ENCODE measurements at regions of chr7 and their contacts with region 1.

Region 1: DNA sequence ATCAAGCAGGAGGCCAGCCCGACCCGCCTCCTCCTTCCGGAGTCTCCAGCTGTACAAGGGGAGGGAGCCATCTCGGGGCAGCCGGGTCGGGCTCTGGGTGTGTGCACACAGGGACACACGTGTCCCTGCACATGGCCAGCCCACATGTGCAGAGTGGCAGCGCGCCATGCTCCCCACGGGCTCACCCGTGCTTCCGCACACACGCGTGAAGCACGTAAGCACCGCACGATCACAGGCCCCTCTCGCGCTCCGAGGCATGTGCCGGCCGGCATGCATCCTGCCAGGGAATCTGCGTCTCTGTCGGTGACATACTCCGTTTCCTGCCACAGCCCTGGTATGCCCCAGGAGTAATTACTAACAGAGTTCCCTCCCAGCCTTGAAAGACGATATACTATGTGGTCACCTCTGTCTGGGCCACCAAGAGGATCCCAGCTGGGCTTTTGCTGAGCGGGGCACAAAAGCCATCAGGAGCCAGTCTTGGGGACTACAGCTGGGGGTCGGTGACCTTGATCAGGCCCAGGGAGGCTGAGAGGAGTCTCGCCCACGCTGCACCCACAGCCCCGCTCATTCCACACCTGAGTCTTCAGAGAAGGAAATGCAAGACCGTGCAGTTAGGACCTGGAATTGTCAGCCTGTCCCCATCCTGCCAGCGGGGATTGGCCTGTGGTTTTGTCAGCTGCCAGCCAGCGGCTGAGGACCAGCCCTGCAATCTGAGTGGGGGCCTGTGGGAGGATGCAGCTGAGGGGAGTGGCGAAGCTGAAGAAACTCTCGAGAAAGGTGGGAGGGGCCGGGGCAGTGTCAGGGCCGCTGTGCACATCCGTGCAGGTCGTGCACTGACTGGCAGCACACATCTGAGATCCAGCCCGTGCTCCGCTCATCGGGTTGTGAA is 11.0 kb upstream of the LFNG start:
- DNase-seq: peak; percentile 89
- ATAC-seq: peak; percentile 64
- H3K4me3 Mint-ChIP-seq: peak overlapping the region; percentile 68
- H3K27ac Mint-ChIP-seq: peak overlapping the region; percentile 84
- H3K4me1 Mint-ChIP-seq: peaks cover 57% of the 10 kb centered on the region
- H3K27me3 Mint-ChIP-seq: no peaks in the 10 kb centered on the region
- CTCF ChIP-seq: no peak

Region 2: DNA sequence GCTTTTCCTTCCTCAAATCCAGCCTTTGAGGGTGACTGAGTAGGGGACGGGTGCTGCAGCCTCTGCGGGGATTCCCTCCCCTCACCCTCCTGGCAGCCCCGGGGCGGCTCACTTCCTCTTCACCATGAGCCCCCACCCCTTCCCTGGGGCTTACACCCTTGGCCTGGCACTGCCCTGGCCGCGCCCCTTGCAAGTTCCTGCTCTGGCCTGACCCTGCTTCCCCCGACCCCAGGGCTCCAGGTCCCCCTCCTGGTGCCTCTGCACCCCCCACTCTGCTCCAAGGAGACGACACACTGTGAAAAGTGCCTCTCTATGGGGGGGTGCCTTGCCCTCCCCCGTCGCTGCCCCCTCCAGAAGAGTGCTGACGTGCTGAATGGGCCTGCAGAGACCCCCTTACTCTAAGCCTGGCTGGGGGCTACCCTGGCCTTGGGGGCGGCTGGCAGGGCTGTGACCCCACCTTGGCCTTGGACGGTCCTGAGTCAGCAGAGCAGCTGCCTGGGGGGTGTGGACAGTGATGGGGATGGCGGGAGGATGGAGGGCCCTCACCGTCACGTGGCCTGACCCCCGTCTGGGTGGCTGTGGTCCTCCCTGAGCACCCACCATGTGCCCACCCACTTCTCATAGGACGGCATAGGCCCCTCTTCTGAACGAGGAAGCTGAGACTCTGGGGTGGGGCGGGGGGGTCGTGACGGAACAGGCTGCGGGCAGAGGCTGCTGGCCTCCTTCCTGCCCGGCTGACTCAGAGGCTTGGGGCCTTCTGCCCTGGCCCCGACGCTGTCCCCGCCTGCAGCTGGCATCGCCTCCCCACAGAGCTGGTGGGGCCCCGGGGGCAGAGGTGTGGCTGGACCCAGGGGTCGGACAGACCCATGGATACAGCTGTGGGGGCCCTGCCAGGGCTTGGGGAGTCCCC is 20.8 kb after region 1 on chr7:
- CTCF ChIA-PET with region 1: interaction called, 3 read pairs
- POLR2A ChIA-PET with region 1: interaction called, 60 read pairs
- intact Hi-C with region 1: no loop called
- DNase-seq: peak; percentile 81
- ATAC-seq: peak; percentile 58
- H3K4me3 Mint-ChIP-seq: peak overlapping the region; percentile 69
- H3K27ac Mint-ChIP-seq: peak overlapping the region; percentile 92
- H3K4me1 Mint-ChIP-seq: peaks cover 57% of the 10 kb centered on the region
- H3K27me3 Mint-ChIP-seq: no peaks in the 10 kb centered on the region
- CTCF ChIP-seq: no peak

Measured in activated CD8-positive, alpha-beta T cell treated with anti-CD3 and anti-CD28 coated beads for 36 hours (primary cell).